Panc1 (cell line): ENCODE measurements at regions of chr2 and their contacts with region 1.

Region 1: GRCh38 chr2:219119422-219120043 is 41.1 kb downstream of the NHEJ1 start:
- DNase-seq: no peak
- ATAC-seq: peak; percentile 91
- H3K4me3 ChIP-seq: no peak overlapping the region
- H3K27ac ChIP-seq: no peak overlapping the region
- H3K4me1 ChIP-seq: no peaks in the 10 kb centered on the region
- H3K27me3 ChIP-seq: no peaks in the 10 kb centered on the region
- CTCF ChIP-seq: peak; percentile 87

Region 2: GRCh38 chr2:219076253-219076652 is 43.3 kb before region 1 on chr2:
- CTCF ChIA-PET with region 1: interaction called, 3 read pairs
- POLR2A ChIA-PET with region 1: interaction called, 13 read pairs
- in situ Hi-C with region 1: no loop called
- intact Hi-C with region 1: no loop called
- DNase-seq: no peak
- ATAC-seq: no peak
- H3K4me3 ChIP-seq: no peak overlapping the region
- H3K27ac ChIP-seq: no peak overlapping the region
- H3K4me1 ChIP-seq: no peaks in the 10 kb centered on the region
- H3K27me3 ChIP-seq: no peaks in the 10 kb centered on the region
- CTCF ChIP-seq: no peak

Region 3: GRCh38 chr2:219177552-219178376 is 58.2 kb after region 1 on chr2 and contains the start of gene RETREG2:
- CTCF ChIA-PET with region 1: no interaction called
- POLR2A ChIA-PET with region 1: no interaction called
- in situ Hi-C with region 1: no loop called
- intact Hi-C with region 1: no loop called
- DNase-seq: peak; percentile 92
- ATAC-seq: peak; percentile 85
- H3K4me3 ChIP-seq: peak within 1 kb of the TSS; percentile 66 to 88
- H3K27ac ChIP-seq: peak within 1 kb of the TSS; percentile 98
- H3K4me1 ChIP-seq: peaks cover 10% of the 10 kb centered on the region
- H3K27me3 ChIP-seq: no peaks in the 10 kb centered on the region
- CTCF ChIP-seq: peak; percentile 80
- total RNA-seq, gene RETREG2: 106 TPM